Right cardiac atrium (tissue), 5 donors: ENCODE measurements at regions of chr14 and their contacts with region 1.

Region 1: GRCh38 chr14:69726761-69727511 is 40.0 kb upstream of the SRSF5 start:
- DNase-seq: peak; percentile 83 to 94 (median 93)
- ATAC-seq: peak; percentile 97 to 98
- H3K4me3 ChIP-seq: peak overlapping the region; percentile 4
- H3K27ac ChIP-seq: no peak overlapping the region
- H3K4me1 ChIP-seq: no peaks in the 10 kb centered on the region
- H3K27me3 ChIP-seq: no peaks in the 10 kb centered on the region

Region 2: GRCh38 chr14:69586404-69586803 is 140.5 kb before region 1 on chr14:
- intact Hi-C with region 1: loop called (anchors 2 to 5 kb)
- DNase-seq: no peak
- ATAC-seq: peak in 1 of 2 donors; percentile 19
- H3K4me3 ChIP-seq: no peak overlapping the region
- H3K27ac ChIP-seq: peak overlapping the region; percentile 50
- H3K4me1 ChIP-seq: peaks cover 4% of the 10 kb centered on the region
- H3K27me3 ChIP-seq: no peaks in the 10 kb centered on the region

Region 3: DNA sequence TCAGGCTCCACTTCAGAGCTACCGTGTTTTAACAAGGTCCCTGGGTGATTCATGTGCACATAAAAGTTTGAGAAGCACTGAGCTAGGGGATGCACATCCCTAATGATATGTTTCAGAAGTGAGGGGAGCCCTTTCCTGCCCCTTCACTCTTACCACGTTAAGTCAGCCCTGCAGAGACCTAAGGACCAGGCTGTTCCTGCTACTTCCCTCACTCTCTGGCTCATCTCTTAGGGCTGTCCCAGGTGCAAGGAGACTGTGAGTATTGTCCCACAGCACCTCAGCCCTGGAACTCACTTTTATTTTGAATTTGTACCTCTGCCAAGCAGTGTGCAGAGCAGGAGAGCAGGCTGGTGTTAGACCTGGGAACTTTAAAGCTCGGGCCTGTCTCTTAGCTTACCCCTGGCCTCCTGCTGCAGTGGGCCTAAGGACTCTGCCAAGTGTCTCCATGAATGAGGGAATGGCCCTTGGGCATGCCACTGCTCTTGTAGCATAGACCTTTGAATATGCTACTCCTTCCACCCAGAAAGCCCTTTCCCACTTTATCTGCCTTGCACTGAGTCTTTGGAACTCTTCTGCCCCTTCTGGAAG is 126.5 kb before region 1 on chr14:
- intact Hi-C with region 1: loop called in 2 of 4 experiments (anchors 2 to 5 kb)
- DNase-seq: no peak
- ATAC-seq: no peak
- H3K4me3 ChIP-seq: no peak overlapping the region
- H3K27ac ChIP-seq: no peak overlapping the region
- H3K4me1 ChIP-seq: no peaks in the 10 kb centered on the region
- H3K27me3 ChIP-seq: no peaks in the 10 kb centered on the region

Region 4: GRCh38 chr14:69605738-69606137 is 121.2 kb before region 1 on chr14:
- intact Hi-C with region 1: loop called in 2 of 4 experiments (anchors 2 to 5 kb)
- DNase-seq: no peak
- ATAC-seq: no peak
- H3K4me3 ChIP-seq: no peak overlapping the region
- H3K27ac ChIP-seq: no peak overlapping the region
- H3K4me1 ChIP-seq: peaks cover 7% of the 10 kb centered on the region
- H3K27me3 ChIP-seq: no peaks in the 10 kb centered on the region

Region 5: GRCh38 chr14:69901113-69901951 is 174.4 kb after region 1 on chr14:
- intact Hi-C with region 1: no loop called
- DNase-seq: peak in 2 of 3 donors; percentile 27 to 51
- ATAC-seq: peak; percentile 34 to 65
- H3K4me3 ChIP-seq: no peak overlapping the region
- H3K27ac ChIP-seq: no peak overlapping the region
- H3K4me1 ChIP-seq: no peaks in the 10 kb centered on the region
- H3K27me3 ChIP-seq: no peaks in the 10 kb centered on the region